BJ (cell line): ENCODE measurements at regions of chr13 and their contacts with region 1.

Region 1: GRCh38 chr13:25286969-25287961 is at the start of gene MTMR6:
- DNase-seq: peak; percentile 45
- H3K4me3 ChIP-seq: peak within 1 kb of the TSS; percentile 84
- H3K27me3 ChIP-seq: no peaks in the 10 kb centered on the region
- CTCF ChIP-seq: peak; percentile 100
- polyA plus RNA-seq, gene MTMR6: 10.5 and 20.8 TPM in 2 replicates

Region 2: GRCh38 chr13:25267715-25268114 is 19.6 kb before region 1 on chr13:
- CTCF ChIA-PET with region 1: interaction called, 10 read pairs
- POLR2A ChIA-PET with region 1: no interaction called
- DNase-seq: no peak
- H3K4me3 ChIP-seq: no peak overlapping the region
- H3K27me3 ChIP-seq: no peaks in the 10 kb centered on the region
- CTCF ChIP-seq: peak; percentile 32; the same call in 1 of the 2 replicates

Region 3: DNA sequence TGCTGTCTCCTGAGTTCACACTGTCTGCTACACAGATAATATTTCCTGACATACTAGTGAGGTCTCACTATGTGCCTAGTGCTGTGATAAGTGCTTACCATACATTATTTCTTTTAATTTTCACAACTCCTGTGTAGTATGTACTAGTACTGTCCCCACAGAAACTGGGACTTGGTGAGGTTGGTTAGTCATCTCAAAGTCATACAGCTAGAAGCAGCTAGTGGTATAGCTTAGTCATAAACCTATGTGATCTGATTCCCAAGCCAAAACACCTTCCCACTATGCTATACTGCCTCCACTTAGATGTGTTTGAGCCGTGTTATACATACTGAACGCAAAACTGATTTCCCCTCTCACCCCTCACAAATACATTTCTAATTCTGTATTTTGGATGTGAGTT is 10.5 kb before region 1 on chr13:
- CTCF ChIA-PET with region 1: interaction called, 20 read pairs
- POLR2A ChIA-PET with region 1: no interaction called
- DNase-seq: no peak
- H3K4me3 ChIP-seq: no peak overlapping the region
- H3K27me3 ChIP-seq: no peaks in the 10 kb centered on the region
- CTCF ChIP-seq: no peak